Heart left ventricle (tissue), 16 donors: ENCODE measurements at regions of chr12 and their contacts with region 1.

Region 1: GRCh38 chr12:92608151-92609091 is 94.4 kb upstream of the PLEKHG7 start:
- DNase-seq: no peak
- ATAC-seq: peak in 1 of 4 donors; percentile 45
- H3K4me3 ChIP-seq: no peak overlapping the region
- H3K27ac ChIP-seq: no peak overlapping the region
- H3K4me1 ChIP-seq: peaks cover 0 to 26% (median 0%) of the 10 kb centered on the region in 12 donors
- H3K27me3 ChIP-seq: no peaks in the 10 kb centered on the region
- CTCF ChIP-seq: peak; percentile 28 to 65 (median 48)
- POLR2A ChIP-seq: no peak

Region 2: GRCh38 chr12:91361864-91362263 is 1246.6 kb before region 1 on chr12:
- intact Hi-C with region 1: loop called in 1 of 10 experiments (anchors 5 kb)
- DNase-seq: no peak
- ATAC-seq: peak in 1 of 4 donors; percentile 59
- H3K4me3 ChIP-seq: peak overlapping the region in 1 of 12 donors; percentile 12
- H3K27ac ChIP-seq: no peak overlapping the region
- H3K4me1 ChIP-seq: peaks cover 0 to 9% (median 0%) of the 10 kb centered on the region in 12 donors
- H3K27me3 ChIP-seq: no peaks in the 10 kb centered on the region
- CTCF ChIP-seq: peak; percentile 57 to 83 (median 74)
- POLR2A ChIP-seq: no peak

Region 3: GRCh38 chr12:92561543-92561899 is 46.9 kb before region 1 on chr12:
- intact Hi-C with region 1: no loop called
- DNase-seq: peak in 4 of 5 donors; percentile 50 to 73 (median 62)
- ATAC-seq: peak; percentile 86 to 93 (median 90)
- H3K4me3 ChIP-seq: no peak overlapping the region
- H3K27ac ChIP-seq: peak overlapping the region in 11 of 12 donors; percentile 36 to 77 (median 54)
- H3K4me1 ChIP-seq: peaks cover 5 to 37% (median 18%) of the 10 kb centered on the region in 12 donors
- H3K27me3 ChIP-seq: no peaks in the 10 kb centered on the region
- CTCF ChIP-seq: no peak
- POLR2A ChIP-seq: no peak